GM12878 (cell line): ENCODE measurements at regions of chr6 and their contacts with region 1.

Region 1: GRCh38 chr6:88982720-88983119 is 19.3 kb upstream of the RNGTT start:
- DNase-seq: peak; percentile 19
- ATAC-seq: peak; percentile 94
- H3K4me3 ChIP-seq: no peak overlapping the region
- H3K27ac ChIP-seq: no peak overlapping the region
- H3K4me1 ChIP-seq: no peaks in the 10 kb centered on the region; the same call in 1 of the 2 replicates
- H3K27me3 ChIP-seq: no peaks in the 10 kb centered on the region
- CTCF ChIP-seq: peak; percentile 51 to 83 (median 72); a peak in 5 of 6 replicates
- EP300 ChIP-seq: no peak
- POLR2A ChIP-seq: no peak
- RAD21 ChIP-seq: peak; percentile 89

Region 2: DNA sequence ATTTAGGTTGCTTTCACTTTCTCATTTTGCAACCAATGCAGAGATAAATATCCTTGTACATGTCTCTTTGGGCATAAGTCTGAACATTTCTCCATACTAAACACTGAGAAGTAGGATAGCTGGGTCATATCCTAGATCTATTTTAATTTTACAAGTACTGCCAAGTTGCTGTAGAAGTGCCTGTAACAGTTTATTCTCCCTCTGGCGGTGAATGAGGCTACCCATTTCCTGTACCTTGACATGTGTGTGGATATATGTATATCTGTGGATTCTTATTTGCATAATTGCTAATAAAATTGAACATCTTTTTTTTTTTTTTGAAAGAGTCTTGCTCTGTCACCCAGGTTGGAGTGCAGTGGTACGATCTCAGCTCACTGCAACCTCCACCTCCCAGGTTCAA is 49.9 kb after region 1 on chr6:
- CTCF ChIA-PET with region 1: interaction called, 14 read pairs
- POLR2A ChIA-PET with region 1: no interaction called
- RAD21 ChIA-PET with region 1: no interaction called
- SMC1A ChIA-PET with region 1: no interaction called
- in situ Hi-C with region 1: no loop called
- intact Hi-C with region 1: no loop called
- DNase-seq: no peak
- ATAC-seq: peak; percentile 48
- H3K4me3 ChIP-seq: no peak overlapping the region
- H3K27ac ChIP-seq: no peak overlapping the region
- H3K4me1 ChIP-seq: no peaks in the 10 kb centered on the region
- H3K27me3 ChIP-seq: no peaks in the 10 kb centered on the region
- CTCF ChIP-seq: peak in 1 of 3 experiments; percentile 10; a peak in 2 of 6 replicates
- EP300 ChIP-seq: no peak
- POLR2A ChIP-seq: no peak
- RAD21 ChIP-seq: no peak

Region 3: DNA sequence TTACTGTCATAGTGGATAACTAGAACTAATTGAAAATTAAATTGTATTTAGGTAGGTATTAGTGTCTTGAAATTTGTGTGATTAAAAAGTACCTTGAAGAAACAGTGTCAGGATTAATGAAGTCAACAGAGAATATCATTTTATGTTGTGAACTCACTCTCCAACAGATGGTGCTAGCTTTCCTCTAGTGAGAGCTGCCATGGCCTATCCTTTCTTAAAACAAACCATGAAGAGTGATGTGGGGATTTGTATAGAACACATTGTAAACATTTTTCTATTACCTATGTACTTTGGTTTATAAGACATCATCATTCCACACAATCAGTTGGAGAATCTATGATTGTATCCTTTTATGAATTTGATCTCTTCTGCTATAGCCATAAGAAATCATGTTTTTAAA is 139.9 kb after region 1 on chr6:
- CTCF ChIA-PET with region 1: interaction called, 27 read pairs
- POLR2A ChIA-PET with region 1: no interaction called
- RAD21 ChIA-PET with region 1: interaction called, 6 read pairs
- SMC1A ChIA-PET with region 1: interaction called, 10 read pairs
- in situ Hi-C with region 1: no loop called
- intact Hi-C with region 1: loop called (anchors 5 kb)
- DNase-seq: no peak
- ATAC-seq: peak; percentile 87
- H3K4me3 ChIP-seq: no peak overlapping the region
- H3K27ac ChIP-seq: no peak overlapping the region
- H3K4me1 ChIP-seq: no peaks in the 10 kb centered on the region
- H3K27me3 ChIP-seq: peaks cover 0 to 4% of the 10 kb centered on the region in 2 experiments; a peak in 1 of 4 replicates
- CTCF ChIP-seq: peak; percentile 50 to 78 (median 52); a peak in 5 of 6 replicates
- EP300 ChIP-seq: no peak
- POLR2A ChIP-seq: no peak
- RAD21 ChIP-seq: peak; percentile 87

Region 4: DNA sequence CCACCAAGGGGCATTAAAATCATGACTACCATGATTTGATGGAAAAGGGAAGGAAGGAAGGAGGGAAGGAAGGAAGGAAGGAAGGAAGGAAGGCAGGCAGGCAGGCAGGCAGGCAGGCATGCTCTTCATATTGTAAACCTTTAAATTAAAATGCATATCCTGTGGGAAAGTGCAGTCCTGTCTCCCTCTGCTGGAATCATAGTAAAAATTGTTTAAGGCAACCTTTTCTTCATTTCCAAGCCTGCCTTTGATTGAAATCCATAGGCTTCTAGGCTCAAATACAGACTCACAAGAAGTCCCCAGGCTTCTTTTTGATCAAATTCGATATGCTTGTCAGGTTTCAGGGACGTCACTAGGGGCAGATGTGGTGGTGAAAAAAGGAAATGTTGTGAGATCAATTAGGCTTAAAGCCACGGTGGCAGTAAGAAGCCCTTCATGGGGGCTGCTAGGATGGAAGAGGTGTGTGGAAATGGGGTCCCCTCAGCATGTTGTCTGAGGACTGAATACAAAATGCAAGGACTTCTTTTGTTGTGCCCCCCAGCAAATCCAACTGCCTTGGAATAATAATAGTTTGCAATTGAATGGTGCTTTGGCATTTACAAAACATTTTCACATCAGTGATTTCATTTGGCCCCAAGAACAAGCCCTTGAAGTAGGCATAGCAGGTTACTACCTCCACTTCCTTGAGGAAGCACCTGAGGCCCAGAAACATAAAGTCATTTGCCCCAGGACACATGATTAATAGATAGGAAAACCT is 260.0 kb after region 1 on chr6:
- CTCF ChIA-PET with region 1: interaction called, 45 read pairs
- POLR2A ChIA-PET with region 1: no interaction called
- RAD21 ChIA-PET with region 1: interaction called, 14 read pairs
- SMC1A ChIA-PET with region 1: interaction called, 28 read pairs
- in situ Hi-C with region 1: loop called (anchors 5 kb)
- intact Hi-C with region 1: loop called (anchors 1 kb)
- DNase-seq: no peak
- ATAC-seq: peak; percentile 70
- H3K4me3 ChIP-seq: no peak overlapping the region
- H3K27ac ChIP-seq: no peak overlapping the region
- H3K4me1 ChIP-seq: peaks cover 14% of the 10 kb centered on the region
- H3K27me3 ChIP-seq: no peaks in the 10 kb centered on the region
- CTCF ChIP-seq: peak; percentile 23 to 59 (median 31); a peak in 4 of 6 replicates
- EP300 ChIP-seq: no peak
- POLR2A ChIP-seq: no peak
- RAD21 ChIP-seq: peak; percentile 68

Region 5: DNA sequence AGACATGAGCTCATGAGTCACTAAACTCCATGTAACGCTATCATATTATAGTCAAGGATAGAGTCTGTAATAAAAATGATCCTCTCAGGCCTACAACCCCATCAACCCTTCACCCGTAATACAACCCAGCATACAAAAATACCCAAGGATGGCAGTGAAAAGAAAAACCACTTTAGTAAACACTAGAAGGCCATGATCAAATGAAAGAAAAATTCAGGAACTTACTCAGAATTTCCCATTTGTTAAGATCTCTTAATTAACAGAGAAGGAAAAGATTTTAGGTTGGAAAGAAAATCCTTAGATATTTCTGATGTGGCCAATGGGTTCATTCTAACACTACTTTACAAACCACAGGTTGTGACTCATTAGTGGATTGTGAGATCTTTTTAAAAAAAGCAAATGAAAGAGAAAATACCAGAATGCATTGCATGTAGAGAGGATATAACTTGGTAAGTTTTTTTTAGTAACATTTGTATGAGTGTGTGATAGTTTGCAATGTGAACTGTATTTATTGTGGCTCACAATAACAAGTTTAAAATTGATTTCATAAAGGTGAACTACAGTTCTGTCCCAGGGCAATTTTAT is 377.8 kb after region 1 on chr6:
- CTCF ChIA-PET with region 1: interaction called, 55 read pairs
- POLR2A ChIA-PET with region 1: no interaction called
- RAD21 ChIA-PET with region 1: interaction called, 13 read pairs
- SMC1A ChIA-PET with region 1: interaction called, 24 read pairs
- in situ Hi-C with region 1: no loop called
- intact Hi-C with region 1: no loop called
- DNase-seq: no peak
- ATAC-seq: peak; percentile 77
- H3K4me3 ChIP-seq: peak overlapping the region; percentile 10; the same call in 1 of the 2 replicates
- H3K27ac ChIP-seq: peak overlapping the region; percentile 90
- H3K4me1 ChIP-seq: peaks cover 64% of the 10 kb centered on the region
- H3K27me3 ChIP-seq: no peaks in the 10 kb centered on the region
- CTCF ChIP-seq: no peak
- EP300 ChIP-seq: peak; percentile 26 to 80; a peak in 2 of 4 replicates
- POLR2A ChIP-seq: no peak
- RAD21 ChIP-seq: no peak